Caco-2 (cell line): ENCODE measurements at regions of chr12 and their contacts with region 1.

Region 1: GRCh38 chr12:95336390-95337067 is 118.9 kb downstream of the VEZT start:
- DNase-seq: peak; percentile 84 to 85
- H3K4me3 ChIP-seq: no peak overlapping the region
- H3K4me3 Mint-ChIP-seq: peak overlapping the region; percentile 56
- H3K27ac Mint-ChIP-seq: peak overlapping the region; percentile 82
- H3K4me1 ChIP-seq: peaks cover 56% of the 10 kb centered on the region
- H3K4me1 Mint-ChIP-seq: peaks cover 26% of the 10 kb centered on the region
- H3K27me3 ChIP-seq: no peaks in the 10 kb centered on the region
- H3K27me3 Mint-ChIP-seq: no peaks in the 10 kb centered on the region
- CTCF ChIP-seq: peak; percentile 66 to 91

Region 2: DNA sequence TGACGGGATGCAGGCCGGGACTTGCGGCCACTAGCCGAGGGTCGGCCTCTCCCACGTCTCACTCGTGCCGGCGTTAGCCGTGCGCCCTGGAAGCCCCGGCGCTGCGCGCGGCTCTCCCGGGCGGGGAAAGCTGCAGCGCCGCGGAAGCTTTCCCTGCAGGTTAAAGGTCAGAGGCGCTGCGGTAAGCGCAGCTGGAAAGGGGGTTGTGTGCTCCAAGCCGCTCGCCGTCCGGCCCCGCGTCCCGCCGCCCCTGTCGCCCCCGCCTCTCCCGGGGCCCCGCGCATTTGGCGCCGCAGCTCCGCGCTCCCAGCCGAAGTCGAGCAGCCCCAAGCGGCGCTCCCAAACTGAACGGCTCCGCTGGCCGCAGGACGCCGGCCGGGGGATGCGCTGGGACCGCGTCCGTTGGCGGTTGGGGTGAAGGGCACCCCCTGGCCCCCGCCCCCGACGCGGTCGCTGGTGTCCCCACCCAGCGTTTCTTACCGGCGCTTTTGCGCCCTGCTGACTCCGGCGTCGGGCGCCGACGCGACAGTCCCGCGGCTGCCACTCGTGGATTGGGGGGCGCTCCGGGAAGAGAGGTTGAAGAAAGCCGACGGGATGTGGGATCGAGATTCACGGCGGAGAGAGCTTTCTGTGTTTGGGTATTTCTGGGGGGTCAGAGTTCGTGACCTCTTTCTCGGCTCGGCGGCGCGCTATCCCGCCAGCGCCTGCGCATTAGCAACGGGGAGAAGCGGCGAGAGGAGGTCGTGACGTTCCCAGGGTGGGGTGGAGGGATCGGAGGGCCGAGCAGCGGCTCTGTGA is 263.4 kb before region 1 on chr12 and contains the start of gene NR2C1:
- CTCF ChIA-PET with region 1: interaction called, 6 read pairs
- POLR2A ChIA-PET with region 1: interaction called, 7 read pairs
- intact Hi-C with region 1: loop called (anchors 1 kb)
- DNase-seq: peak; percentile 96 to 97
- H3K4me3 ChIP-seq: peak within 1 kb of the TSS; percentile 94
- H3K4me3 Mint-ChIP-seq: peak within 1 kb of the TSS; percentile 91
- H3K27ac Mint-ChIP-seq: peak within 1 kb of the TSS; percentile 94
- H3K4me1 ChIP-seq: peaks cover 5% of the 10 kb centered on the region; the same call in 1 of the 2 replicates
- H3K4me1 Mint-ChIP-seq: peaks cover 6% of the 10 kb centered on the region
- H3K27me3 ChIP-seq: no peaks in the 10 kb centered on the region
- H3K27me3 Mint-ChIP-seq: no peaks in the 10 kb centered on the region
- CTCF ChIP-seq: peak in 1 of 2 experiments; percentile 59
- total RNA-seq, gene NR2C1: 49.7 and 51.1 TPM in 2 replicates

Region 3: GRCh38 chr12:95318071-95318545 is 18.4 kb before region 1 on chr12:
- CTCF ChIA-PET with region 1: interaction called, 5 read pairs
- POLR2A ChIA-PET with region 1: interaction called, 3 read pairs
- intact Hi-C with region 1: loop called (anchors 1 kb)
- DNase-seq: peak; percentile 46 to 83
- H3K4me3 ChIP-seq: no peak overlapping the region
- H3K4me3 Mint-ChIP-seq: peak overlapping the region; percentile 1
- H3K27ac Mint-ChIP-seq: peak overlapping the region; percentile 58
- H3K4me1 ChIP-seq: peaks cover 54% of the 10 kb centered on the region
- H3K4me1 Mint-ChIP-seq: peaks cover 21% of the 10 kb centered on the region
- H3K27me3 ChIP-seq: no peaks in the 10 kb centered on the region
- H3K27me3 Mint-ChIP-seq: no peaks in the 10 kb centered on the region
- CTCF ChIP-seq: no peak

Region 4: GRCh38 chr12:95408201-95408600 is 71.7 kb after region 1 on chr12:
- CTCF ChIA-PET with region 1: no interaction called
- POLR2A ChIA-PET with region 1: no interaction called
- intact Hi-C with region 1: no loop called
- DNase-seq: no peak
- H3K4me3 ChIP-seq: no peak overlapping the region
- H3K4me3 Mint-ChIP-seq: no peak overlapping the region
- H3K27ac Mint-ChIP-seq: no peak overlapping the region
- H3K4me1 ChIP-seq: no peaks in the 10 kb centered on the region
- H3K4me1 Mint-ChIP-seq: peaks cover 12% of the 10 kb centered on the region
- H3K27me3 ChIP-seq: no peaks in the 10 kb centered on the region
- H3K27me3 Mint-ChIP-seq: no peaks in the 10 kb centered on the region
- CTCF ChIP-seq: no peak

Region 5: GRCh38 chr12:95473884-95474659 is 137.5 kb after region 1 on chr12 and contains the start of gene METAP2:
- CTCF ChIA-PET with region 1: no interaction called
- POLR2A ChIA-PET with region 1: interaction called, 3 read pairs
- intact Hi-C with region 1: loop called (anchors 2 kb)
- DNase-seq: peak; percentile 97 to 98
- H3K4me3 ChIP-seq: peak within 1 kb of the TSS; percentile 99
- H3K4me3 Mint-ChIP-seq: peak within 1 kb of the TSS; percentile 93
- H3K27ac Mint-ChIP-seq: peak within 1 kb of the TSS; percentile 97
- H3K4me1 ChIP-seq: peaks cover 13% of the 10 kb centered on the region
- H3K4me1 Mint-ChIP-seq: peaks cover 27% of the 10 kb centered on the region
- H3K27me3 ChIP-seq: no peaks in the 10 kb centered on the region
- H3K27me3 Mint-ChIP-seq: no peaks in the 10 kb centered on the region
- CTCF ChIP-seq: no peak
- total RNA-seq, gene METAP2: 134 and 138 TPM in 2 replicates

Region 6: GRCh38 chr12:95506707-95507523 is 170.4 kb after region 1 on chr12:
- CTCF ChIA-PET with region 1: no interaction called
- POLR2A ChIA-PET with region 1: no interaction called
- intact Hi-C with region 1: no loop called
- DNase-seq: no peak
- H3K4me3 ChIP-seq: no peak overlapping the region
- H3K4me3 Mint-ChIP-seq: no peak overlapping the region
- H3K27ac Mint-ChIP-seq: peak overlapping the region; percentile 71
- H3K4me1 ChIP-seq: no peaks in the 10 kb centered on the region; the same call in 1 of the 2 replicates
- H3K4me1 Mint-ChIP-seq: no peaks in the 10 kb centered on the region
- H3K27me3 ChIP-seq: no peaks in the 10 kb centered on the region
- H3K27me3 Mint-ChIP-seq: no peaks in the 10 kb centered on the region
- CTCF ChIP-seq: no peak